Heart right ventricle (tissue), 16 donors: ENCODE measurements at regions of chr1 and their contacts with region 1.

Region 1: DNA sequence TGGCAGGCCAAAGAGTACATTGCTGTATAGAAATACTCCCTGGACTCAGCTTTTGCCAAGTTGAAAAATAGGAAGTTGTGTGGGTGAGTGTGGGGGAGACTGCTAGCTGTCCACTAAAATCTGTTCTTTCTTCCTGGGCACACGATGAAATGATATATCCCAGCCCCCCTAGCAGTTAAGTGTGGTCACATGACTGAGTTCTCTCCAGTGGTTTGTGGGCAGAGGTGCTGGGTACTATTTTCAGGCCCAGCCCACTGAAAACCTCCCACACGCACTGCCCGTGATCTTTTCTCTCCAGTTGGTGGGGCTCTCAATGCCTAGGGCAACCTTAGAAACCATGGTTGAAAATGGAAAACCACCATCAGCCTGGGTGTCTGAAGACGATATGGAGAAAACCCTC is 119.7 kb upstream of the LMO4 start:
- DNase-seq: no peak
- ATAC-seq: peak in 1 of 8 donors; percentile 16
- H3K4me3 ChIP-seq: no peak overlapping the region
- H3K27ac ChIP-seq: no peak overlapping the region
- H3K4me1 ChIP-seq: peaks cover 0 to 9% (median 0%) of the 10 kb centered on the region in 9 donors
- H3K27me3 ChIP-seq: peaks cover 0 to 7% (median 0%) of the 10 kb centered on the region in 7 donors
- CTCF ChIP-seq: no peak

Region 2: DNA sequence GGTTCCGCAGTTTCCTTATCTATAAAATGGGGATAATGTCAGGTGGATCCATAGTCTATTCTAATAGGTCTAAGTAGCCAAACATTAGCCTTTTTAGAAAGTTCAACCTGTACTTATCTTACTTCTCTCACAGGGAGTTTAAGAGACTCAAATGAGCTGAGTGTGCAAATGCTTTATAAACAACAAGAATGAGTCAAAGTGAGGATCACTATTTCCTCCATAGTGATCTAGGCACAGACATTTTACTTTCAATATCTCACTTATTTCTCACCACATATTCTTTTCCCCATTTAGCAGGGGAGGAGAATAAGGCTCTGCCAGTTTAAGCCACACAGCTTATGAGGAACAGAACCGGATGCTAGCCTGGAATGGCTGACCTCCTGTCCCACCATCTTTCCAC is 27.7 kb after region 1 on chr1:
- intact Hi-C with region 1: loop called in 1 of 10 experiments (anchors 1 kb)
- DNase-seq: no peak
- ATAC-seq: no peak
- H3K4me3 ChIP-seq: no peak overlapping the region
- H3K27ac ChIP-seq: no peak overlapping the region
- H3K4me1 ChIP-seq: no peaks in the 10 kb centered on the region
- H3K27me3 ChIP-seq: peaks cover 0 to 5% (median 4%) of the 10 kb centered on the region in 7 donors
- CTCF ChIP-seq: no peak